Activated CD4-positive, alpha-beta memory T cell treated with anti-CD3 and anti-CD28 coated beads, Interleukin-2, amount 10 ng/mL, durations not matched to agents 7 days and 5 days (primary cell): ENCODE measurements at regions of chr7 and their contacts with region 1.

Region 1: DNA sequence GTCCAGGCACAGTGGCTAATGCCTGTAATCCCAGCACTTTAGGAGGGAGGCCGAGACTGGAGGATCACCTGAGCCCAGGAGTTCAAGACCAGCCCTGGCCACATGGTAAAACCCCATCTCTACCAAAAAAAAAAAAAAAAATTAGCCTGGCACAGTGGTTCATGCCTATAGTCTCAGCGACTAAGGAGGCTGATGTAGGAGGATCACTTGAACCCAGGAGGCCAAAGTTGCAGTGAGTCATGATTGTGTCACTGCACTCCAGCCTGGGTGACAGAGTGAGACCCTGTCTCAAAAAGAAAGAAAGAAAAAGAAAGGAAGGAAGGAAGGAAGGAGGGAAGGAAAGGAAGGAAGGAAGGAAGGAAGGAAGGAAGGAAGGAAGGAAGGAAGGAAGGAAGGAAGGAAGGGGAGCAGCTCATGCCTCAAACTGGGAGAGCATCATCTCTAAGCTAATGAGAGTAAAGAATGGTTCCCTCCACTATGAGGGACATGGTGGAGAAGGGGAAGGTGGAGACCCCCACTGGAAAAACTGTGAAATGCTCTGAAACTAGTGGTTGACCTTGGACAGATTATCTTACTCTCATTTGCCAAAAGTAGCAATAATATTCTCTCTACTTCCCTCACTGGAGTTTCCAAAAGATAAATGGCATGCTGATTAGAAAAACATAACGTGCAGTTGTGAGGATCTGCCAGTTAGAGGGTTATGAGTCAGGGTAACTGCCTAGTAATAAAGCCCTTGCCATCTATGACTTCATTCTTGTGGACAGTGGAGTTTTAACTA is 16.8 kb downstream of the GIMAP5 start:
- DNase-seq: no peak
- H3K4me3 Mint-ChIP-seq: no peak overlapping the region
- H3K27ac Mint-ChIP-seq: peak overlapping the region; percentile 94
- H3K4me1 Mint-ChIP-seq: peaks cover 55% of the 10 kb centered on the region
- H3K27me3 Mint-ChIP-seq: no peaks in the 10 kb centered on the region

Region 2: DNA sequence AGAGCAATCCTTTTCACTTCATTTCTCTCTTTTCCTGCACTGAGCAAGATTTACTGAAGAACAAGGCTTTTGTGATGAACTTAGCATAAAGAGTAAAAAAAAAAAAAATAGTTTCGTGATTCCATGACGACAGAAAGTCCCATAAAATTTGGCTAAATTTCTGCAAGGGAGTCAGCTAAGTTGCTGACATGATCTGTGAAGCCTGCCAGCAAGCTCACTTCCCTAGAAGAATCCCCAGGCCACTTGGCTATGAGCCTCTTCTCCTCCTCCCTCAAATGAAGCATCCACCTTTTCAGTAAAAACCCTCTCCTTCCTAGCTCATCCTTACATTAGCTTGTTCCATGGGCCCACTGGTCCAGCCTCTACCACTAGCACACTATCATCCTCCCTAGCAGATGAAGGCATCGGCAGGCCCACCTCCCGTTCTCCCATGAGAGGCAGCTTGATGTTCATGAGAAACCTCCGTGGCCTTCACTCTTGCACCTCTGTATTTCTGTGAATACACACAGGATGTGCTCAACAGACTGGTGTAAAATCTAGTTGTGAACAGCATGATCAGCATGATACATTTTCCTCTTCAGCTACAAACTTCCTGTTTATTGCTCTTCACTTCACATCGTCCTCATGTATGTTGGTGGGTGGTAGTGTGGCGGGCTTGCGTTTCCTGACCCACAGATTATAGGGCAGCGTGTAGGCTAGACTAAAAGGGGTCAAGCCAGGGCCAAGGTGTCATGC is 272.7 kb before region 1 on chr7:
- CTCF ChIA-PET with region 1: interaction called, 7 read pairs
- POLR2A ChIA-PET with region 1: interaction called, 21 read pairs
- DNase-seq: peak; percentile 70
- H3K4me3 Mint-ChIP-seq: peak overlapping the region; percentile 81
- H3K27ac Mint-ChIP-seq: peak overlapping the region; percentile 99
- H3K4me1 Mint-ChIP-seq: peaks cover 95% of the 10 kb centered on the region
- H3K27me3 Mint-ChIP-seq: no peaks in the 10 kb centered on the region

Region 3: GRCh38 chr7:150520145-150520544 is 233.9 kb before region 1 on chr7:
- CTCF ChIA-PET with region 1: interaction called, 7 read pairs
- POLR2A ChIA-PET with region 1: interaction called, 44 read pairs
- DNase-seq: peak; percentile 49
- H3K4me3 Mint-ChIP-seq: peak overlapping the region; percentile 100
- H3K27ac Mint-ChIP-seq: peak overlapping the region; percentile 82
- H3K4me1 Mint-ChIP-seq: peaks cover 38% of the 10 kb centered on the region
- H3K27me3 Mint-ChIP-seq: no peaks in the 10 kb centered on the region

Region 4: DNA sequence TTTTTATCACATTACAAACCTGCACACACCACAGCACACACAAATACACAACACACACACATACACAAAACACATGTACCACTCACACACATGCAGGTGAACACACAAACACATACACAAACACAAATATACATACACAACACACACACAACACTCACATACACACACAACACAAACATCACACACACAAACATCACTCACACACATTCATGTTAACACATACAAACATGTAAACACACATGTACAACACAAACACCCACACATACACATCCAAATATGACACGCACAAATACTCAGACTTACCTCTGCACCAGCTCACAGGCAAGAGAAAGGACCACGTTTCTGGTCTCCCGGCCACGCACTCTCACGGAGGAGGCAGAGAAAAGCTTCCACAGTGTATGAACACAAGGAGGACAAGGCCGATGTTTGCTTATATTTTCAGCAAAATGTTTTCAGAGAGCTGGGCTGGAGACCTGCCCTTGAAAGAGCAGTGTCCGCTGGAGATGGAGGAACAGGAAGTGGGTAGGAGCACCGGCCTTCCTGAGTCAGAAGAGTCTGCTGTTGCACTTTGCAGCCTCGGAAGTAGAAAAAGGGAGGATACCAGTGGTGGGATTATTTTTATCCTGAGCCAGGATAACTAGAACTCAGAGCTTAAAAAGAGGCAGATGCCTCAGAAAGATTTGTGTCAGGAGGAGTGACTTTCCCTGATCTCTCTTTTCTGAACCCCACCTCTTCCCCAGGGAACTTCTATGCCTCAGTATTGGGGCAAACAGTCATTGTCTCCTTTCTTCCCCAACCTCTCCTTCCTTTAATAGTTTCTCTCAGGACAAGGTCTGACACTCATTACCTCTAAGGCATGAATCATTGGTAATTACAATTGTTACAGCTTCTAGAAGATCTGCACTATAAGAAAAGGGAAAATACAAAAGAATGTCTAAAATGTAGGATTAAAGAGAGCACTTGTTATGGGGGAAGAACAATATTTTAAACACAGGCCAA is 121.8 kb before region 1 on chr7 and contains the start of gene GIMAP6:
- CTCF ChIA-PET with region 1: interaction called, 7 read pairs
- POLR2A ChIA-PET with region 1: interaction called, 19 read pairs
- DNase-seq: peak; percentile 56
- H3K4me3 Mint-ChIP-seq: peak within 1 kb of the TSS; percentile 98
- H3K27ac Mint-ChIP-seq: peak within 1 kb of the TSS; percentile 89
- H3K4me1 Mint-ChIP-seq: peaks cover 68% of the 10 kb centered on the region
- H3K27me3 Mint-ChIP-seq: no peaks in the 10 kb centered on the region
- total RNA-seq, gene GIMAP6: 84.9 to 85.9 TPM

Region 5: GRCh38 chr7:150668472-150668911 is 85.5 kb before region 1 on chr7:
- CTCF ChIA-PET with region 1: interaction called, 8 read pairs
- POLR2A ChIA-PET with region 1: interaction called, 26 read pairs
- DNase-seq: peak; percentile 75
- H3K4me3 Mint-ChIP-seq: peak overlapping the region; percentile 41
- H3K27ac Mint-ChIP-seq: peak overlapping the region; percentile 95
- H3K4me1 Mint-ChIP-seq: peaks cover 84% of the 10 kb centered on the region
- H3K27me3 Mint-ChIP-seq: no peaks in the 10 kb centered on the region

Region 6: DNA sequence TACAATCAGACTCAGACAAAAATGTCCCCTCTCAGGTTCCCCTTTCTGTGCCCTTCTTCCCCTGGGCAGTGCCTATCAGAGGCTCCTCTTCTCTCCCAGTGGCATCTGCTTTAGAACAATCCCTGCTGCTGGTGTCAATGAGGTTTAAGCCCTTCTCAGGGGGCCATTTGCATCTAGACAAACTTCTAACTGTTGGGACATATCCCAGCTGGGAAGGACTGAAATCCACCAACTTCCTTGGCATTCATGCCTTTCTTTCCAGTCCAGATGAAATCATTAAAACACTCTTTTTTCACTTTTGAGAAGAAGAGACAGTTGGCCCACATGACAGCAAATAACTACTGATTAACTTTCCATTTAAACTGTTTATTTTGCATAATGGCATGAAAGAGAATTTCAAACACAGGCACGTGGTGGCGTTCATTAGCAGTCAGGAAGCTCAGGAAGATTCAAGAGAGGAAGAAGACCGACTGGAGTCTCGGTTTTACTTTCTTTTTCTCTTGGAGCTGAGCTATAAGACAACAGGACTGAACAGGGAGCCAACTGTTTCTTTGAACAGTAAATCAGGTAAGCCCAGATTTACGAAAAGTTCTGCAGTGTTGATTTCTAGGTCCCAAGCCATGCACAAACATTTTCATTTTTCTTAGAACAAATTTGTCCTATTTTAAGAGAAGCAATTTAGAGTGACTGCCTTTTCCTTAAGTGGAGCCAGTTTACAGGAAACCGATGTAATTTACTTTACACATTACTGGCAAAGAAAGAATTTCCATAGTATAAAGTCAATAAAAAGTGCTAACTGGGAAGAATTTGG is 68.6 kb before region 1 on chr7 and contains the start of gene GIMAP2:
- CTCF ChIA-PET with region 1: interaction called, 11 read pairs
- POLR2A ChIA-PET with region 1: interaction called, 17 read pairs
- DNase-seq: peak; percentile 33
- H3K4me3 Mint-ChIP-seq: peak within 1 kb of the TSS; percentile 100
- H3K27ac Mint-ChIP-seq: peak within 1 kb of the TSS; percentile 98
- H3K4me1 Mint-ChIP-seq: peaks cover 76% of the 10 kb centered on the region
- H3K27me3 Mint-ChIP-seq: no peaks in the 10 kb centered on the region
- total RNA-seq, gene GIMAP2: 113 to 120 TPM